ENCODE measurements at regions of chr2 and their contacts with region 1.

Region 1: GRCh38 chr2:106638043-106638442 is 150.9 kb downstream of the CD8B2 start:
- DNase-seq: no peak
- H3K4me3 ChIP-seq: no peak overlapping the region
- H3K27ac ChIP-seq: no peak overlapping the region
- H3K4me1 ChIP-seq: peaks cover 0 to 5% (median 0%) of the 10 kb centered on the region in 4 donors
- H3K27me3 ChIP-seq: no peaks in the 10 kb centered on the region
- CTCF ChIP-seq: peak; percentile 53 to 68

Region 2: DNA sequence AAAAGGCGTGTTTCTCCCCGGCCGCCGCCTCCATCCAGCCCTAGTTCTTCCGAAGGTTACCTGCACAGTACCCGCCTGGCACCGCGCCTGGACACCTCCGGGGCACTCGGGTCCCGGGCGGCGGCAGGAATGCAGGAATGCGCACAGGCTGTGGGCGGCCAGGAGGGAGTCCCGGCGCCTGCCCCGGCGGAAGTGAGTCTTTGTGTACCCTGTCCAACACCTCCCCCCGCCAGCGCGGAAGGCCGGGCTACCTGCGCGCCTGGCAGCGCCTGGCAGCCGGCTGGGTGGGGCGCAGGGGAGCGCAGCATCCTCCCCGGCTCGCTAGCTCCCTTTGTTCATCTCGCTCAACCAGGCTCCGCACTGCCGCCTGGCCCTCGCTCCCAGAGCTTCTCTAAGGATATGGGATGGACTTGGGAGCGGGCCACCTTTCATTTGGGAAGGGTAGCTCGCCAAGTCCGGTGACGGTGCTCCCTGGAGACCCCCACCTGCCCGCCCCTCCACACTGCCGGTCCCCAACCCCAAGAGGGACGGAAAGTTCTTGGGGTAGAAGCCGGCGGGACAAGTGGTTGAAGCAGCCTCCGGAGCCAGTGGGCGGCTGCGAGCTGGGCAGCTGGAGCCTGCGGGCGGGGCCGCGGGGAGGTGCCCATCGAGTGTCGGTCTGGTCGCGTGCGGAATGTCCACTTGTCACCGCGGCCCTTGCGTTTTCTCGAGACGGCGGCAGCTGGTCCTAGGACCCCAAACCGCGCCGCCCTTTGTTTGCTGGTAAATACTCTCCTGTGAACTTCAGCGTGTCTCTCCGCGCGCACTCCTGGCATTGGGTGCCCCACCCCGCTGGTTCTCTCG is 249.1 kb after region 1 on chr2:
- intact Hi-C with region 1: loop called (anchors 5 kb)
- DNase-seq: peak in 1 of 2 donors; percentile 78
- H3K4me3 ChIP-seq: peak overlapping the region; percentile 78 to 87
- H3K27ac ChIP-seq: peak overlapping the region; percentile 87
- H3K4me1 ChIP-seq: peaks cover 0 to 32% (median 15%) of the 10 kb centered on the region in 4 donors
- H3K27me3 ChIP-seq: no peaks in the 10 kb centered on the region
- CTCF ChIP-seq: no peak

Region 3: DNA sequence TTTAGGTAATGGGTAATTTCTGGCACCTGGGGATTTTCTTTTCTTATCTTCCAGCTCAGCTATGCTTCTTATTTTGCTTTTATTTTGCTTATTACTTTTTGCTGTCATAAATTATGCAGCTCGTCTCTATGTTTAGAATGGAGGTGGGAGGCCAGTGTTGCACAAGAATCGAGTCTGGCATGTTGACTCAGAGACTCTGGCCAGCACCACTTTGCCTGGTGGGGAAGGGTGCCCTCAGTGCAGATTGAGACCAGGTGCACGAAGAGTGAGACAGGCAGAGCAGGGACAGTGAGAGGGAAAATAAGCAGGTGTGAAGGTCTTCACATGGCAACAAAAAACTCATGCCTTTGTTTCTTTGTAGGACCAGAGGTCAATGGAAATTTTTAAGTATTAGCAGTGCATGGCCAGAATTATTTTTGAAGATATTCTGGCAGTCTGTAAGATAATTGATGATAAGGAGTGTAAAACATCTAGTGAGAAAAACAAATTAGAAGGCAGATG is 1289.0 kb after region 1 on chr2:
- intact Hi-C with region 1: loop called (anchors 10 kb)
- DNase-seq: no peak
- H3K4me3 ChIP-seq: no peak overlapping the region
- H3K27ac ChIP-seq: no peak overlapping the region
- H3K4me1 ChIP-seq: no peaks in the 10 kb centered on the region
- H3K27me3 ChIP-seq: no peaks in the 10 kb centered on the region
- CTCF ChIP-seq: no peak

Measured in tibial artery (tissue), 4 donors.